ENCODE measurements at regions of chr14 and their contacts with region 1.

Region 1: DNA sequence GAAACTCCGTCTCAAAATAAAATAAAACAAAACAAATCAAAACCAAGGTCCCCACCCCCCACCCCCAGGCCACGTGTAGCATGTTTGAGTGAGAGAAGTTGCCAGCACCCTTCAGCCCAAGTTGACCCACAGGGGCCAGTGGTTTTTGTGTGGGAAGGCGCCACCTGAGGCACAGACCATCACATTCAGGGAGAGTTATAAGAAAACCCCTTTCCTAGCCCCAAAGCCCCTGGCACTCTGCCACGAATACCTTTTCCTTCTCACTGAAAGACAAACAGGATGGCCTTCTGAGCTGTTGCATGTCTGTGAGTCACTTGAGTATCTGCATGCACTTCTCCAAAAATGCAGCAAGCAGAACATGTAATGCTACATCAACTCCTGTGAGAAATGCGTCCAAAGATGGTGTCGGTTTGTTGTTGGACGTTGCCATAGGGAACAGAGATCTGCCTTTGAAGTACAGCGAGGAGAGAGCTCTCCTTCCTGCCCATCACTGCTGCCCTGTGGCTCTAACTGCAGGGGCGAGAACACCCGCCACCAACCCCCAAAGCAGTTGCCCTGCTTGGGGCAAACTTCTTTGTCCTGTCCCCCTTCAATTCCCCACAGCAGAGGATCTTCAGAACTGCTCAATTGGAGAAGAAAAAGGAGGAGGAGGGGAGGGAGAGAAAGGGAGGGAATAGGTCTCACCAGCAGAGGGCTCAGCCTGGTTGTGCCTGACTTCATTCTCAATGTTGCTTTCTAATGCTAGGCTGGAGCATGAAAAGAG is 2.7 kb upstream of the TRAF3 start:
- DNase-seq: peak in 1 of 2 donors; percentile 68
- ATAC-seq: peak; percentile 72
- H3K4me3 ChIP-seq: no peak overlapping the region
- H3K27ac ChIP-seq: no peak overlapping the region
- H3K4me1 ChIP-seq: peaks cover 0 to 5% of the 10 kb centered on the region in 2 donors
- H3K27me3 ChIP-seq: no peaks in the 10 kb centered on the region

Region 2: GRCh38 chr14:102824832-102825231 is 50.3 kb after region 1 on chr14:
- intact Hi-C with region 1: no loop called
- DNase-seq: peak; percentile 60 to 79
- ATAC-seq: peak; percentile 54
- H3K4me3 ChIP-seq: no peak overlapping the region
- H3K27ac ChIP-seq: no peak overlapping the region
- H3K4me1 ChIP-seq: no peaks in the 10 kb centered on the region
- H3K27me3 ChIP-seq: no peaks in the 10 kb centered on the region

Region 3: GRCh38 chr14:102878174-102878969 is 103.8 kb after region 1 on chr14:
- intact Hi-C with region 1: loop called in 1 of 2 experiments (anchors 10 kb)
- DNase-seq: no peak
- ATAC-seq: no peak
- H3K4me3 ChIP-seq: no peak overlapping the region
- H3K27ac ChIP-seq: no peak overlapping the region
- H3K4me1 ChIP-seq: no peaks in the 10 kb centered on the region
- H3K27me3 ChIP-seq: no peaks in the 10 kb centered on the region

Region 4: DNA sequence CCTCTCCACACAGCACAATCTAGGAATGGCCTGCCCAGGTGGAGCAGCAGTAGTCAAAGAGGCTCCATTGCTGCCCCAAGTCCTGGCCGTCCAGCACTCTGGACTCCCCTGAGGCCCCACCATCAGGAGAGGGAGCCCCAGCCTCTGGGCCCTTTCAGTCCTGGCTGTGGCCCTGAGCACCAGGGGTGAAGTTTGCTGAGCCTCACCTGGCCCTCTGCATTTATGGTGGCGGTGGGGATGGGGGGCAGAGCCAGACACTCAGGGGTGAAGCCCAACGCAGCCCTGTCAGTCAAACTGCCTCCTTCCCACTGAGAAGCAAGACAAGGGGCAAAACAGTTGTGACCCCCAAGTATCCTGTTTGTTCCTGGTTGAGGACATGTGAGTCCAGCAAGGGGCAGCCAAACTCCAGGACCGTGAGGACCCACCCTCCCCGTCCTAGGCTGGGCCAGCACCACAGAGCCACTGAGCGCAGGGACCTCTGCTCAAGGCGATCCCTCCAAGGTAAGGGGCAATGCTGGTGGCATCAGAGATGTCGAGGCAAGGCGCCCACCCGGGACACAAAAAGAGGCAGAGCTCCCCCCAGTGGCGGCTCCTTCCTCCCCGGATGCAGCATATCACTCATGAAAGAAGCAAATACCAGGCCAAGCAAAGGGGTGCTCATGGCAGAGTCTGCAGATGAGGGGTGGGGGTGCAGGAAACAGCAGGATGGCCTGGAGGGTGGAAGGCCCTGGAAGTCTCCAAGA is 143.1 kb after region 1 on chr14:
- intact Hi-C with region 1: loop called in 1 of 2 experiments (anchors 2 kb)
- DNase-seq: peak; percentile 69 to 87
- ATAC-seq: no peak
- H3K4me3 ChIP-seq: no peak overlapping the region
- H3K27ac ChIP-seq: no peak overlapping the region
- H3K4me1 ChIP-seq: no peaks in the 10 kb centered on the region
- H3K27me3 ChIP-seq: no peaks in the 10 kb centered on the region

Measured in aorta (tissue), 5 donors.